Calu3 (cell line): ENCODE measurements at regions of chr9 and their contacts with region 1.

Region 1: GRCh38 chr9:110058304-110058953 is 149.5 kb downstream of the C9orf152 start:
- DNase-seq: peak; percentile 63
- H3K4me3 Mint-ChIP-seq: no peak overlapping the region
- H3K27ac Mint-ChIP-seq: peak overlapping the region; percentile 14
- H3K4me1 Mint-ChIP-seq: no peaks in the 10 kb centered on the region
- H3K27me3 Mint-ChIP-seq: no peaks in the 10 kb centered on the region
- CTCF ChIP-seq: no peak

Region 2: DNA sequence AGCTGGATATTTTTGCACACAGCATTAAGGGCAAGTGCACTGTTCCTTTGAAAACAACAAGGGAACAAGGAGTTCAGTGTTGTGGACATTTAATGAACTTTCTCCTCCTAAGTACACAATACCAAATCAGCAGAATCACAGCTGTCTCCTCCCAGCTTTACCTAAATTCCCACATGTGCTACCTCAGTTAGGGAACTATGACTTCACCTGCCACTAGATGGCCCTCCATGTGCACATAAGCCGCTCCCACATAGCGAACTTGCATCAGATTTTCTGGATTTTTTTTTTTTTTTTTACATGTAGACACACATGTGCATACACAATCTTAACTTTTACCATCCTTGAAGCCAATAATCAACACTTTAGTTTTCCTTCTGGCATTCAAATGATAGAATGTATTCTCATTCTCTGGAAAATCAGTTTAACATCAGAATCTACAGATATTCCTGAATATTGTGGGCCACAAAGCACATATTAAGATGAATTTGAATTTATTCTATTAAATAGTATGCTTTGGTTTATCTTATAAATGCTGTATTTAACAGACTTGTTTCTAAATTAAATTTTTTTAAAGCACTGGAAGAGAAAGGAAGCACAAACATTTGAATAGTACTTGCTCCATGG is 154.8 kb before region 1 on chr9:
- CTCF ChIA-PET with region 1: interaction called, 12 read pairs
- intact Hi-C with region 1: loop called (anchors 1 kb)
- DNase-seq: peak; percentile 58
- H3K4me3 Mint-ChIP-seq: no peak overlapping the region
- H3K27ac Mint-ChIP-seq: no peak overlapping the region
- H3K4me1 Mint-ChIP-seq: no peaks in the 10 kb centered on the region
- H3K27me3 Mint-ChIP-seq: peaks cover 33% of the 10 kb centered on the region
- CTCF ChIP-seq: no peak

Region 3: GRCh38 chr9:110152704-110153374 is 94.4 kb after region 1 on chr9:
- CTCF ChIA-PET with region 1: no interaction called
- intact Hi-C with region 1: loop called (anchors 2 kb)
- DNase-seq: peak; percentile 28
- H3K4me3 Mint-ChIP-seq: no peak overlapping the region
- H3K27ac Mint-ChIP-seq: no peak overlapping the region
- H3K4me1 Mint-ChIP-seq: peaks cover 9% of the 10 kb centered on the region
- H3K27me3 Mint-ChIP-seq: no peaks in the 10 kb centered on the region
- CTCF ChIP-seq: peak; percentile 51